Posterior vena cava (tissue), 2 donors: ENCODE measurements at regions of chr1 and their contacts with region 1.

Region 1: DNA sequence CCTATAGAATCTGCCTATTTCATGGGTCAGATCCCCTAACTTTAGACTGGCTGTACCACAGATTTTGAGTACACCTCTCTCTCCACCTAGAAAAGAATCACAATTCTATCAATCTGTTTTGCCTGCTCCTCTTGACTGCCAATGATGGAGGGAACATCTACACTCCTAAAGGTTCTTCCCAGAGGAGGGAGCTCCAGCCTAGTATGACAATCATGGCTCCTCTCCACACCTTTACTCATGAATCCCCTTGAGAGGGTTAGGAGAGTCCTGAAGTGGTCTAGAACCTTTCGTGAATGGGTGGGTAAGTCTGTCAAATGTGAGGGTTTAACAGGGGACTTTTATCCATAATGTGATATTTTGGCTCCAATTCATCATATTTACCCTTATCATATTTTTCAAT is 48.0 kb downstream of the DNAI4 start:
- DNase-seq: no peak

Region 2: GRCh38 chr1:66227966-66228365 is 648.7 kb before region 1 on chr1:
- intact Hi-C with region 1: loop called in 1 of 2 experiments (anchors 5 kb)
- DNase-seq: no peak